Stomach (tissue), 19 donors: ENCODE measurements at regions of chr17 and their contacts with region 1.

Region 1: GRCh38 chr17:35731239-35731931 is at the start of gene RASL10B:
- DNase-seq: peak; percentile 54 to 84
- H3K4me3 ChIP-seq: peak within 1 kb of the TSS; percentile 60 to 83 (median 72)
- H3K27ac ChIP-seq: peak within 1 kb of the TSS in 2 of 5 donors; percentile 34 to 55
- H3K4me1 ChIP-seq: peaks cover 8 to 33% (median 24%) of the 10 kb centered on the region in 4 donors
- H3K27me3 ChIP-seq: peaks cover 0 to 14% (median 0%) of the 10 kb centered on the region in 3 donors
- CTCF ChIP-seq: no peak
- EP300 ChIP-seq: no peak
- POLR2A ChIP-seq: no peak
- total RNA-seq, gene RASL10B: 0.37 to 0.89 (median 0.43) TPM in 3 of 5 donors, not detected in the others

Region 2: GRCh38 chr17:35612924-35613521 is 118.4 kb before region 1 on chr17:
- intact Hi-C with region 1: loop called (anchors 10 kb)
- DNase-seq: peak; percentile 44 to 80
- H3K4me3 ChIP-seq: no peak overlapping the region
- H3K27ac ChIP-seq: no peak overlapping the region
- H3K4me1 ChIP-seq: peaks cover 0 to 38% (median 3%) of the 10 kb centered on the region in 4 donors
- H3K27me3 ChIP-seq: no peaks in the 10 kb centered on the region
- CTCF ChIP-seq: peak in 4 of 7 experiments; percentile 26 to 49 (median 38)
- EP300 ChIP-seq: no peak
- POLR2A ChIP-seq: no peak

Region 3: DNA sequence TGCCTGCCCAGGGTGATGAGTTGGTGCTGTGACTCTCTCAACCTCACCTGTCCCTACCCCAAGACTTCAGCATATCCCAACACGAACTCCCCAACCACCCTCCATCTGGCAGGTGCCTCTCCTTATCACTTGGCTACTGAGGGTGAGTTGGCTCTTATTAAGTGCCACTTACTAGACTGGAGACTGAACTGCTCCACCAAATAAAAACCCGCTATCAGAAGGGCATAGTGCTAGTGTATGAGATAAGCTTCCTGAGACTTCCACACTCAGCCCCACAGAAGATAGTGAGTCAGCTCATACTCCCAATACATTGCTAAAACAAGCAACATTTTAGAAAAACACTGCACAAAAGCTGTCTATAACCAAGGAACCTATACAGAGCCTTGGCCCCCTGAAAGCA is 316.7 kb after region 1 on chr17:
- intact Hi-C with region 1: no loop called
- DNase-seq: no peak
- H3K4me3 ChIP-seq: no peak overlapping the region
- H3K27ac ChIP-seq: no peak overlapping the region
- H3K4me1 ChIP-seq: no peaks in the 10 kb centered on the region
- H3K27me3 ChIP-seq: peaks cover 0 to 12% (median 0%) of the 10 kb centered on the region in 3 donors
- CTCF ChIP-seq: no peak
- EP300 ChIP-seq: no peak
- POLR2A ChIP-seq: no peak